Activated CD4-positive, alpha-beta memory T cell treated with anti-CD3 and anti-CD28 coated beads for 36 hours (primary cell): ENCODE measurements at regions of chr1 and their contacts with region 1.

Region 1: DNA sequence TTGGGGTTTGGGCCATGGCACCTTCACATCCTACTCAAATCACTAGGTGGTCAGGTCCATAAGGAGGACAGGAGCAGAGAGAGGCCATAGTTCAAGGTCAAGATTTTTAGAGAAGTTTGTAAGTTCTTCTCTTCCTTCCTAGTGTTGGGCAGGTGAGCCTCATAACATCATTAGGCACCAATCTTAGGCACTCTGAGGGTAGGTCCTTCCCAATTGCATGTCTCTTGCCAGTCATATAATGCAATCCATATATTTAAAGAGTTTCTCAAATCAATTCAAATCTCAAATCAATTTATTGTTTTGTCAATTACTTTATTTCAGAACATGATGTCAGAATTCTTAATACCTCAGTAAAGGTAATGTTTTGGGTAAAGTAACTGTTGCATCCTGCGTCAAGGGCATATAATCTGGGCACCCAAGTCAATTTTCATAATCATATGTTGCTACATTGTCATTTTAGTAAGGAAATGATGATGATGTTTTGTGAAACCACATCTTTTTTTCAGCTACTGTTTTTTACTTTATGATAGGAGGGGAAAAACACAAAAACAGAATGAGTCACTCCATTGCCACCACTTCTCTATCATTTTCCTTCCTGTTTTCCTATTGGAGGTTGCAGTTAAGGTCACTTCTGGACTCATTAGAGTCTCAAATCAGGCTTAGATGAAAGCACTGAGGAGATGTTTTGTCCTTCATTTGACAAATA is 122.7 kb downstream of the UCHL5 start:
- DNase-seq: no peak
- H3K4me3 Mint-ChIP-seq: no peak overlapping the region
- H3K27ac Mint-ChIP-seq: peak overlapping the region; percentile 36
- H3K4me1 Mint-ChIP-seq: peaks cover 20% of the 10 kb centered on the region
- H3K27me3 Mint-ChIP-seq: no peaks in the 10 kb centered on the region

Region 2: GRCh38 chr1:192904438-192904895 is 32.0 kb before region 1 on chr1:
- CTCF ChIA-PET with region 1: no interaction called
- POLR2A ChIA-PET with region 1: no interaction called
- intact Hi-C with region 1: loop called (anchors 1 kb)
- DNase-seq: peak; percentile 20
- H3K4me3 Mint-ChIP-seq: no peak overlapping the region
- H3K27ac Mint-ChIP-seq: no peak overlapping the region
- H3K4me1 Mint-ChIP-seq: no peaks in the 10 kb centered on the region
- H3K27me3 Mint-ChIP-seq: no peaks in the 10 kb centered on the region

Region 3: DNA sequence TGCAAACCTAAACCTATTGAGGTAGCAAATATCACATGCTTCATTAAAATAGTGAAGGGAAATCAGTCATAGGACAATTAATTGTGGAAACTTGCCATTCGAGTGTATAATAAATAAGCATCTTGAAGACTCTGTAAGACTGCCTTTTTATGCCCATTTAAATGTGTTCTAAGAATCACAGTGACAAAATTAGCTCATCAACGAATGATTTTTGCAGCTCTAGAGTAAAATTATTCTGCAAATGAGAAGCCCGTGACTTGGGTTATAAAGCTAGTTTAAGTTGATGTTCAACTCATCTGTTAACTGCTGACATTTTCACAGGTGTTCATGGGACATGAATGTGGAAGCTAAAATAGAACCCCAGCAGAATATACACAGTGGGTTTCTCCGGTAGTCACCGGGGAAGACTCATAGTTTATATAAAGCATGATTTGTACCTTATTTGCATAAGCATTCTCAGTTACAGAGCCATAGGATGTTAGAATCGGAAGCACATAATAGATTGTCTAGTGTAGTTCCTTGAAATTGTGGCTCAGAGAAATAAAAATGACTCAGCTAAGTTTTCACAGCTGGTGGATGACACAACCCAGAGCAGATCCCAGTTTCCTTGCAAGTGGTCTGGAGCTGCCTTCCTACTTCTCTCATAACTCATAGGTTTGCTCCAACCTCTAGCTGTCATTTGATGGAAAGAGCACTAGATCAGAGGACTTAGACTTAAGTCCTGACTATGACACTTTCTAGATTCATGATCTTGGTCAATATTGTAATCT is 15.4 kb after region 1 on chr1:
- CTCF ChIA-PET with region 1: interaction called, 3 read pairs
- POLR2A ChIA-PET with region 1: no interaction called
- intact Hi-C with region 1: loop called (anchors 1 kb)
- DNase-seq: no peak
- H3K4me3 Mint-ChIP-seq: no peak overlapping the region
- H3K27ac Mint-ChIP-seq: no peak overlapping the region
- H3K4me1 Mint-ChIP-seq: no peaks in the 10 kb centered on the region
- H3K27me3 Mint-ChIP-seq: no peaks in the 10 kb centered on the region

Region 4: GRCh38 chr1:192983349-192983980 is 47.0 kb after region 1 on chr1:
- CTCF ChIA-PET with region 1: no interaction called
- POLR2A ChIA-PET with region 1: no interaction called
- intact Hi-C with region 1: loop called (anchors 1 kb)
- DNase-seq: peak; percentile 68
- H3K4me3 Mint-ChIP-seq: no peak overlapping the region
- H3K27ac Mint-ChIP-seq: peak overlapping the region; percentile 82
- H3K4me1 Mint-ChIP-seq: peaks cover 45% of the 10 kb centered on the region
- H3K27me3 Mint-ChIP-seq: no peaks in the 10 kb centered on the region

Region 5: DNA sequence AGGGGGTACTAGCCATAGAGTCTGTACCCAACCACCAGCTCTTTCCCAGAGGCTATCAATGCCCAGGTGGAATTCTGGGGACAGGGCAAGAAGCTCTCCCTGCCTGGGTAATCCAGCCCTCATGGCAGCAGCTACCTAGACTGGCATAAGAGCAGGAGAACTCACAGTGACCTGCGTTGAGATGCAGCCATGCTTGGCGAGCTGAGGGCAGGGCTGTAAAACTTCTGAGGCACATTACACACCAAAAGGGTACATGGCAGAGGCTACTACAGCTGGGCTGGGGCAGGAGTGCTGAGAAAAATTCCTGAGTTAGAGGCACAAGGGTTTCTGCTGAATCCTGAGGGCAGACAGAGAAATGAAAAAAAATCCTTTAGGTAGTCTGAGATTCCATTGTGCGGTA is 1177.8 kb after region 1 on chr1:
- CTCF ChIA-PET with region 1: no interaction called
- POLR2A ChIA-PET with region 1: no interaction called
- intact Hi-C with region 1: no loop called
- DNase-seq: no peak
- H3K4me3 Mint-ChIP-seq: no peak overlapping the region
- H3K27ac Mint-ChIP-seq: no peak overlapping the region
- H3K4me1 Mint-ChIP-seq: no peaks in the 10 kb centered on the region
- H3K27me3 Mint-ChIP-seq: no peaks in the 10 kb centered on the region